ENCODE measurements at regions of chrX and their contacts with region 1.

Region 1: GRCh38 chrX:134236626-134237614 is at the start of gene CCDC160:
- DNase-seq: peak; percentile 64
- H3K4me3 ChIP-seq: peak within 1 kb of the TSS; percentile 40 to 60 (median 54)
- H3K27ac ChIP-seq: no peak within 1 kb of the TSS
- H3K4me1 ChIP-seq: no peaks in the 10 kb centered on the region
- H3K27me3 ChIP-seq: no peaks in the 10 kb centered on the region
- CTCF ChIP-seq: no peak
- EP300 ChIP-seq: no peak
- POLR2A ChIP-seq: no peak
- total RNA-seq, gene CCDC160: 0.27 to 1.4 (median 0.82) TPM in 3 of 4 donors, not detected in the other

Region 2: GRCh38 chrX:134171661-134172587 is 65.0 kb before region 1 on chrX:
- intact Hi-C with region 1: loop called (anchors 10 kb)
- DNase-seq: no peak
- H3K4me3 ChIP-seq: peak overlapping the region; percentile 37 to 59 (median 54)
- H3K27ac ChIP-seq: peak overlapping the region in 3 of 4 donors; percentile 67 to 75 (median 71)
- H3K4me1 ChIP-seq: peaks cover 0 to 5% (median 0%) of the 10 kb centered on the region in 4 donors
- H3K27me3 ChIP-seq: no peaks in the 10 kb centered on the region
- CTCF ChIP-seq: no peak
- EP300 ChIP-seq: no peak
- POLR2A ChIP-seq: no peak

Region 3: DNA sequence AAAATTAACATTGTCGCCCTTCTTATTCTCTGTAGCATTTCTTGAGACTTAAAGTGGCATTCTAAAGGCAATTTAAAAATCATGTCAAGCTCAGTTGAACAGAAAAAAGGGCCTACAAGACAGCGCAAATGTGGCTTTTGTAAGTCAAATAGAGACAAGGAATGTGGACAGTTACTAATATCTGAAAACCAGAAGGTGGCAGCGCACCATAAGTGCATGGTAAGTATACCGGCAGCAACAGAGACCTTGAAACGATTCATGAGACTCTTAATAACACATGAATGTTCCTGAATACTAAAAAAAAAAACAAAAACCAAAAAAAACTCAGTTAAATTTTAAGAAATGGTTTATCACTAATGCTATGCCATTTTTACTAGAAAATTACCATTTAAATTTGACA is 140.6 kb after region 1 on chrX:
- intact Hi-C with region 1: no loop called
- DNase-seq: no peak
- H3K4me3 ChIP-seq: no peak overlapping the region
- H3K27ac ChIP-seq: no peak overlapping the region
- H3K4me1 ChIP-seq: no peaks in the 10 kb centered on the region
- H3K27me3 ChIP-seq: no peaks in the 10 kb centered on the region
- CTCF ChIP-seq: no peak
- EP300 ChIP-seq: no peak
- POLR2A ChIP-seq: no peak